Posterior cingulate gyrus (tissue), 11 donors: ENCODE measurements at regions of chr4 and their contacts with region 1.

Region 1: GRCh38 chr4:123396307-123397143 is at the start of gene SPRY1:
- DNase-seq: peak; percentile 56 to 95 (median 78)

Region 2: DNA sequence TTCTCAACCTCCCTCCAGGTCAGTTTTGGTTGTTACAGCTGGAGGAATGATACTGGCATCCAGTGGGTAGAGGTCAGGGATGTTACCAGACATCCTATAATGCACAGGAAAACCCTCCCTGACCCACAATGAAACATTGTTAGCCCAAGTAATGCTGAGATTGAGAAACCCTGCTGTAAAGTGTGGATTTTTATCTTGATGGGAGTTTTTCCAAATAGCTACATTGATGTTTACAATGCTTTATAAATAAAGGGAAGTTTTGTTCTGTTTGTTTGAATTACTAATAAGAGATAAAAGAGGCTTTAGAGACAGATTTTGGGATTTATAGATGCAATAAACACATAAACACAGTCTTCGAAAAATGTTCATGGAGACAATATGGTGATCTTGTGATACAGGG is 280.1 kb before region 1 on chr4:
- intact Hi-C with region 1: no loop called
- DNase-seq: no peak

Region 3: DNA sequence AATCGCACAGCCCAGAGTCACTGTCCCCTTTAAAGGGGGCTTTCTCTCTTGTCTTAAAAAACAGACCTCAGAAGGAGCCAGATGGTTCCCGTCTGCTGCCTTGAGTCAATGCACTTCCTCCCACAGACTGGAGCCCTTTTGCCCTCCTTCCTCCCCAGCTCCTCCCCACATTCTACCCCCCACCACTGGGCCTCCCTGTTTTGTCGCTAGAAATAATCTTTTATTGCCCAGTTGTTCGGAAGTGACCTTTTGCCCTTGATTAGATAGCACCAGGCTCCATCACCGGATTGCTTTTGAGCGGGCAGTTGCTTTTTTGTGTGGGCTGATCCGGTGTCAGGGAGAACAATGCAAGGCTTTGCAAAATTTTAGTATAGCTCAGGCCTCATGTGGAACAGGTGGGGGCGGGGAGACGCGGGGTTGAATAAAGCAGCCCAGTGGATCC is 47.8 kb after region 1 on chr4:
- intact Hi-C with region 1: no loop called
- DNase-seq: no peak

Region 4: GRCh38 chr4:123505095-123506010 is 108.8 kb after region 1 on chr4:
- intact Hi-C with region 1: loop called (anchors 5 kb)
- DNase-seq: peak; percentile 33 to 93 (median 57)

Region 5: DNA sequence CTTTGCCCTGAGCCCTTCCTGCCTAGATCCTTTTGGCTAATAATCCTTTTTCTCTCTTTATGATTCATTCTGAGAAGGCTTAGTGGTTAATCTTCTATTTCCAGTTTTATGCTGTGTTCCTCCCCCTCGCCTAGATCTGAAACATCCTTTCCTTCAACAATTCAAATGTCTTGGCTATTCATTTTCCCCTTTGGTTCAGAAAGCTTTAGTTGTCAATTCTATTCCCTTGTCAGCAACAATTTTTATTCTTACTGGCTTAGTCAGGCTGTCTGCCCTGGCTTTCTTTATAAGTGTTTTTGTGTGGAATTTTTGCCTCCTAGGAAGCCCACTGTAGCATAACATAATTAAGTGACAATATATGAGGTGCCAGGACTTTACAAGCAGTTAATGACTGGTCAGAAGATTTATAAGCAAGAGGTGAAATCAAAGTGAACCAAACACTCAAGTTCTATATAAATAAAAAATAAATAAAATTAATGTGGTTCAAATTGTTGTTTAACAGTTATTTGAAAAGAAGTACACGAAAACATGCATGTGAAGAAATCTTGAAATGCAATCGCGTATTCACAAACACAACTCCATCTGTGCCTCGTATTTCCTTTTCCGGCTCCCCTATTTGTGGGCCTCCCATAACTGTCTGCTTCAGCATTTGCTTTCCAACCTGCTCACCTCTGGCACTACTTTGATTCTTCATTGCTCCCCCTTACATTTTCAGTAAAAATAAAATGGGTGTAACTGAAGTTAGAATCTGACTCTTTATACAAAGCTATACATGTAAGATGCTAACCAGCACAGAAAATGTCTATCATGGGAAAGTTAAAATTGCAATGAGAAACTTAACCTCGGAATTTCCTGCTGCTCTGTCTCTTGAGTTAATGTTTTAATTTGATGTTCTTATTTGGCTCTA is 235.5 kb after region 1 on chr4:
- intact Hi-C with region 1: no loop called
- DNase-seq: no peak

Region 6: GRCh38 chr4:123649645-123650391 is 253.3 kb after region 1 on chr4:
- intact Hi-C with region 1: loop called (anchors 5 kb)
- DNase-seq: peak in 1 of 10 donors; percentile 2

Region 7: GRCh38 chr4:124111922-124112321 is 715.4 kb after region 1 on chr4:
- intact Hi-C with region 1: loop called (anchors 10 kb)
- DNase-seq: no peak